Transverse colon (tissue), 4 donors: ENCODE measurements at regions of chr7 and their contacts with region 1.

Region 1: DNA sequence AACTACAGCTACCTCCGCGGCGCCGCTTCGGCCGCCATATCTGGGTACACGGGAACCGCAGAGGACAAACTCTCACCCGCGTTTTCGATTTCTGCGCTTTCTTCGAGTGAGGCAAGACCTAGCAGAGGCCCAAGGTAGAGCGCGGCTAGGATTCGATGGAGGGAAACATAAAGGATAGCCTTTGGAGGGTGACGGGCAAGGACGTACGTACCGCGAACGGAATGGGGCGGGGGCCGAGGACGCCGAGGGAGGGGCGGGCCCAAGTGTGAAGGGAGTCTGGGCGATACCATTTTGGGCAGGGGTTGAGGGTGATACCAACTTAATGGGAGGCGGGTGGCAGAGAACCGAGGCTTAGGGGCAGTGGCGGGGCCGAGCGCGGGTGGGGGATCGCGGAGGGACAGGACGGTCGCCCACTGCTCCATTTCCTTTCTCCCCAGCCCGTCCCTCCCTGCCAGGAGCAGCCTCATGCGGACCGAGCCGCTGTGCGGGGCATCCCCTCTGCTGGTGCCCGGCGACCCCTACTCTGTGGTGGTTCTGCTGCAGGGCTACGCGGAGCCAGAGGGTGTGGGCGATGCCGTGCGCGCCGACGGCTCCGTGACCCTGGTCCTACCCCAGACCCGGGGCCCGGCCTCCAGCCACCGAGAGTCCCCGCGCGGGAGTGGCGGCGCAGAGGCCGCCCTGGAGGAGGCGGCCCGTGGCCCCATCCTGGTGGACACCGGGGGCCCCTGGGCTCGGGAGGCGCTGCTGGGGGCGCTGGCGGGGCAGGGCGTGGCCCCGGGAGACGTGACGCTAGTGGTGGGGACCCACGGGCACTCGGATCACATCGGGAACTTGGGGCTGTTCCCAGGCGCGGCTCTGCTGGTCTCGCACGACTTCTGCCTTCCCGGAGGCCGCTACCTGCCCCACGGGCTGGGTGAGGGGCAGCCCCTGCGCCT is at the start of gene MBLAC1:
- DNase-seq: peak; percentile 94
- H3K4me3 ChIP-seq: peak within 1 kb of the TSS; percentile 60 to 90 (median 68)
- H3K27ac ChIP-seq: peak within 1 kb of the TSS; percentile 95 to 97 (median 96)
- H3K4me1 ChIP-seq: peaks cover 6 to 54% (median 44%) of the 10 kb centered on the region in 4 donors
- H3K27me3 ChIP-seq: no peaks in the 10 kb centered on the region
- CTCF ChIP-seq: no peak
- EP300 ChIP-seq: no peak
- POLR2A ChIP-seq: peak; percentile 92
- total RNA-seq, gene MBLAC1: 4.4 to 5.6 TPM in 2 of 4 donors, not detected in the others

Region 2: DNA sequence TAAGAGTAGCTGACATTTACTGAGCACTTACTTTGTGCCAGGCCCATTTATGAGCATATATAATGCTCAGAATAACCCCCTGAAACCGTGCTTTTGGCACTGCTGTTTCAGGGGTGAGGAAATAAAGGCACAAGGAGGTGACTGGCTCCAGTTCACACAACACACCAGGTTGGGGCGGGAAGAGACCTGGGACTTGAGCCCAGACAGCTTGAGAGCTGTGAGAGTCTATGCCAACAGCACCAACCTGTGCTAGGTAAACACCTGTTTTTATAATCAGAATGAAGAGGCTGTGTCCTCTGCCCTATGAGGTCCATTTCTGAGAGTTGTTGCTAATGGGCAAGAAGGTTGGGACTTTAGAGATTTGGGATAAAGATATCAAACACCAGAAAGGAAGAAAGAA is 142.6 kb before region 1 on chr7:
- in situ Hi-C with region 1: no loop called
- intact Hi-C with region 1: loop called (anchors 2 kb)
- DNase-seq: no peak
- H3K4me3 ChIP-seq: no peak overlapping the region
- H3K27ac ChIP-seq: no peak overlapping the region
- H3K4me1 ChIP-seq: no peaks in the 10 kb centered on the region
- H3K27me3 ChIP-seq: no peaks in the 10 kb centered on the region
- CTCF ChIP-seq: no peak
- EP300 ChIP-seq: no peak
- POLR2A ChIP-seq: no peak

Region 3: GRCh38 chr7:100088621-100089457 is 38.4 kb before region 1 on chr7 and contains the start of gene COPS6:
- in situ Hi-C with region 1: no loop called
- intact Hi-C with region 1: loop called (anchors 5 kb)
- DNase-seq: peak; percentile 88
- H3K4me3 ChIP-seq: peak within 1 kb of the TSS; percentile 66 to 90 (median 78)
- H3K27ac ChIP-seq: peak within 1 kb of the TSS; percentile 89 to 93 (median 92)
- H3K4me1 ChIP-seq: peaks cover 13 to 21% (median 19%) of the 10 kb centered on the region in 4 donors
- H3K27me3 ChIP-seq: no peaks in the 10 kb centered on the region
- CTCF ChIP-seq: no peak
- EP300 ChIP-seq: no peak
- POLR2A ChIP-seq: peak; percentile 76
- total RNA-seq, gene COPS6: 18.3 to 61.3 (median 44.5) TPM